Activated T-helper 1 cell treated with anti-CD3 and anti-CD28 coated beads, Interleukin-12 subunit alpha, Interleukin-12 subunit beta, Interleukin-2, Interleukin-4 antibody, amounts not matched to agents 30 ng/mL and 10 ng/mL and 1 ng/mL, durations not matched to agents 14 hours and 24 hours and 36 hours (primary cell): ENCODE measurements at regions of chr3 and their contacts with region 1.

Region 1: DNA sequence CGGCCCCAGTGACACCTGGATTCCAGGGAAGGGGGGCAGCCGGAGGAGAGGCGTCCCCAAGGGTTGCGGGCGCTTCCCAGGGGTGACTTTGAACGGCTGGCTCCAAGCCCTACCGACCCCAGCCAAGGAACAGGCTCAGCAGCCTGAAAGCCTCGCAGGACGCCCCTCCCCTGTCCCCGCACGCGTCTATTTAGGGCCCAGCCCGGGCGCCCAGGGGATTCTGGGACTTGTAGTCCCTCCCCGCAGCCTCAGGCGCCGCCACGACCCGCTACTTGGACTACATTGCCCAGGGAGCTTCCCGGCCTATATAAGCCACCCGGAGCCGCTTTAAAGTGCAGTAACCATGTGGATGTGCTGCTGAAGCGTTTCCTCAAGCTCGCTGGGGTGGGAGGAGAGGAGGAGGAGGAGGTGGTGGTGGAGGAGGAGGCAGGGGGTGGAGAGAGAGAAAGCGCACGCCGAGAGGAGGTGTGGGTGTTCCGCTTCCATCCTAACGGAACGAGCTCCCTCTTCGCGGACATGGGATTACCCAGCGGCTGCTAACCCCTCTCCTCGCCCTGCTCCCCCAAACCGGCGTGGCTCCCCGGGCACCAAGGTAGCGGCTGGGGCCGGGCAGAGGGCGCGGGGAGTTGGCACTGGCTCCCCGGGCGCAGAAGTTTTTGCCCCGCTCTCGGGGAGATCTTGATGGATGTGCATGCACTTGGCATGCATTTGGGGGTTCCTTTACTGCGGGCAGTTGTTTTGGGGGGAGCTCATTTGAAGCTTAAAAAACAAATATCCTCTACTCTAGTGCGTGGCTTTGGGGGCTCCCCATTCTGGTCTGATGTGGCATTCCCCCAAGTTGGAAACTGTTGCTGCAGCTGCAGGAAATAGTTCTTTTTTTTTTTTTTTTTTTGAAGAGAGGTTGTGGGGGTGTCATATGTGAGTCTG is at the start of gene ITPR1:
- DNase-seq: peak; percentile 97
- H3K4me3 Mint-ChIP-seq: peak within 1 kb of the TSS; percentile 96
- H3K27ac Mint-ChIP-seq: peak within 1 kb of the TSS; percentile 83
- H3K4me1 Mint-ChIP-seq: peaks cover 59% of the 10 kb centered on the region
- H3K27me3 Mint-ChIP-seq: peaks cover 35% of the 10 kb centered on the region
- total RNA-seq, gene ITPR1: 108 and 113 TPM in 2 replicates

Region 2: DNA sequence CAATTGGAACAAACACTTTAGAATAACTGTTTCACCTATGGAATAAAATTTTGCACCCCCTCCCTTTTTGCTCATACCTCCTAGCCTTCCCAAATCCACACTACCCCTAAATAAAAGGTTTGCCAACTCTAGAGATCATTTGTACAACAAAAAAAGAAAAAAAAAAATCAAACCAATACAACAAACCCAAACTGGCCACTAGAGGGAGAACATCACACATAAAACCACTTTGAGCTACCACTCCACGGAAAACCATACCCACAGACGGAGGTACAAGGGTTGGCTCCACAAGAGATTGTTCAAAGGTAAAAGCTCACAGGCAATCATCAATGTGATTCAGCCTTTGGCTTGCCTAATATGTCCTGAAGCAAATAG is 142.5 kb before region 1 on chr3:
- intact Hi-C with region 1: loop called (anchors 1 kb)
- DNase-seq: peak; percentile 37
- H3K4me3 Mint-ChIP-seq: peak overlapping the region; percentile 9
- H3K27ac Mint-ChIP-seq: peak overlapping the region; percentile 31
- H3K4me1 Mint-ChIP-seq: peaks cover 20% of the 10 kb centered on the region
- H3K27me3 Mint-ChIP-seq: peaks cover 4% of the 10 kb centered on the region

Region 3: GRCh38 chr3:4421121-4421520 is 72.2 kb before region 1 on chr3:
- intact Hi-C with region 1: loop called (anchors 1 kb)
- DNase-seq: no peak
- H3K4me3 Mint-ChIP-seq: peak overlapping the region; percentile 25
- H3K27ac Mint-ChIP-seq: peak overlapping the region; percentile 57
- H3K4me1 Mint-ChIP-seq: peaks cover 25% of the 10 kb centered on the region
- H3K27me3 Mint-ChIP-seq: no peaks in the 10 kb centered on the region

Region 4: GRCh38 chr3:4504340-4505261 is 11.3 kb after region 1 on chr3:
- intact Hi-C with region 1: loop called (anchors 1 kb)
- DNase-seq: peak; percentile 4
- H3K4me3 Mint-ChIP-seq: peak overlapping the region; percentile 17
- H3K27ac Mint-ChIP-seq: peak overlapping the region; percentile 82
- H3K4me1 Mint-ChIP-seq: peaks cover 41% of the 10 kb centered on the region
- H3K27me3 Mint-ChIP-seq: no peaks in the 10 kb centered on the region

Region 5: DNA sequence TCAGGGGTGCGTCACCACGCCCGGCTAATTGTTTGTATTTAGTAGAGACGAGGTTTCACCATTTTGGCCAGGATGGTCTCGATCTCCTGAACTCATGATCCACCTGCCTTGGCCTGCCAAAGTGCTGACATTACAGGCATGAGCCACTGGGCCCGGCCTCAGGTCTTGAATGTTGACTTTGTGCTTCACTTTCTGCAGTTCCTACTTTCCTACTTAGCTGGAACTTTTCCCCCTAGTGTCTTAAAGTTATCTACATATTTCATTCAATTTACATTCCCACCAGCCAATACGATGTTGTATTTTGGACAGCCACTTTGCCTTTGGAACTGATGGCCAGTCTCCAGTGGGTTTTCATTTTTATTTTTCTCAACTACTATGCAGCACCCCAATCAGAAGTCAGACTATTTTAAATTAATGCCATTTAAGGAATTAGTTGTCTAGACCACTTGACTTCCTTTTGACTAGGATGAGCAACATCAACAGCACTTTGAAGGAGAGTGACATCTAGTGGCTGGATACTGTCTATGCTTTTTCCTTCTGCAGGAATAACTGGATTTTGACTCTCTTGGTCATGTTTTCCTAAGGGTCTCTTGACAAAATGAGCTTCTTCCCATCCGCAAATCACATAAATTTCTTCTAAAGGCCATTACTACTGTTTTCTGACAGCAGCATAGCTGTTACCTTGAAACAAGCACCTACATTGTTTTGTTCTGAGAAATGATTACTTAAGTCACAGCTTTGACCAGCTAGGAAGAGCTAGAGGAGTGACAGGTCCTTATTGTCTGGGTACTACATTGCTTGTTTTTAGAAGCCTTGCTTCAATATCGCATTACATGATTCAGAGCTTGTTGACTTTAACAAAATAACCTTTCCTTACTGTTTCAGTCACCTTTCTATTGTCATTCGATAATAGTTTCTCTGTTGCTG is 140.1 kb after region 1 on chr3:
- intact Hi-C with region 1: loop called (anchors 1 kb)
- DNase-seq: no peak
- H3K4me3 Mint-ChIP-seq: no peak overlapping the region
- H3K27ac Mint-ChIP-seq: peak overlapping the region; percentile 6
- H3K4me1 Mint-ChIP-seq: peaks cover 8% of the 10 kb centered on the region
- H3K27me3 Mint-ChIP-seq: no peaks in the 10 kb centered on the region

Region 6: DNA sequence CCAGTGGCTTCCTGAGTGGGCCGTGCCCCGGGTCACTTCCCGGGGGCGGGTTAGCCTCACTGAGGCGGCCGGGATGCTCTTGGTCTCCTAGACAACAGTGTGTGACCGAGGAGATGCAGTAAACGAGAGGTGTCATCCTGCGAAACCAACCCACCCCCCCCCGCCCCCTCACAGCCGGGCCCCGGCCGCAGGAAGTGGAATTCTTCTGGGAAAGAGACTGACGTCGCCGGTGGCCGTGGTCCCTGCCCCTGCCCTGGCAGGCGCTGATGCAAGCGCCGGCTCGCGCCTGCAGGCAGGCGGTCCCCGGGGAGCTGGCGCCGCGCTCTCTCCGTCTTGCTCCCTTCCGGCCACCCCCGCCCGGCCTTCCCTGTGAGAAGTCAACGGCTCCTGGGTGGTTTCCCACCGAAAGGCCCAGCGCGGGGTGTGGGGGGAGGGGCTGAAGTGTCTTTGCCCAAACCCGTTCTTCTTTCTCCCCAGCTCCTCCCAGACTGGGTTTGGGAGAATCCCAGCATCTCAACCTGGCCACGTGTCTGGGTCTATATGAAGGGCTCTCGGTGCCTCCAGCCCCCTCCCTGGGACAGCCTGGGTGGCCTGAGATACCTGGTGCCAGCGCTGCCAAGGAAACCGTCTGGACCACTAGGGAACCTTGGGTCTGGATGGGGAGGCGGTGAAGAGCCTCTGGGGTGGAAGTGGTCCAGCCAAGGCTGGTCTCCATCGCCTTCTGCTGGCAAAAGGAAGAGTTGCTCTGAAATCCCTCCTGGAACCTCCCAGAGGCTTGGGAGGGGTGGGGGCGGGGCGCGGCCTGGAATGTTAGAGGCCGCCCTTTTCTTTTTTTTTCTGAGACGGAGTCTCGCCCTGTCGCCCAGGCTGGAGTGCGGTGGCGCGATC is 533.3 kb after region 1 on chr3:
- intact Hi-C with region 1: loop called (anchors 10 kb)
- DNase-seq: peak; percentile 59
- H3K4me3 Mint-ChIP-seq: peak overlapping the region; percentile 81
- H3K27ac Mint-ChIP-seq: peak overlapping the region; percentile 95
- H3K4me1 Mint-ChIP-seq: peaks cover 70% of the 10 kb centered on the region
- H3K27me3 Mint-ChIP-seq: no peaks in the 10 kb centered on the region